Activated T-helper 1 cell treated with anti-CD3 and anti-CD28 coated beads, Interleukin-12 subunit alpha, Interleukin-12 subunit beta, Interleukin-2, Interleukin-4 antibody, amounts not matched to agents 30 ng/mL and 10 ng/mL and 1 ng/mL, durations not matched to agents 14 hours and 24 hours and 36 hours (primary cell): ENCODE measurements at regions of chr20 and their contacts with region 1.

Region 1: DNA sequence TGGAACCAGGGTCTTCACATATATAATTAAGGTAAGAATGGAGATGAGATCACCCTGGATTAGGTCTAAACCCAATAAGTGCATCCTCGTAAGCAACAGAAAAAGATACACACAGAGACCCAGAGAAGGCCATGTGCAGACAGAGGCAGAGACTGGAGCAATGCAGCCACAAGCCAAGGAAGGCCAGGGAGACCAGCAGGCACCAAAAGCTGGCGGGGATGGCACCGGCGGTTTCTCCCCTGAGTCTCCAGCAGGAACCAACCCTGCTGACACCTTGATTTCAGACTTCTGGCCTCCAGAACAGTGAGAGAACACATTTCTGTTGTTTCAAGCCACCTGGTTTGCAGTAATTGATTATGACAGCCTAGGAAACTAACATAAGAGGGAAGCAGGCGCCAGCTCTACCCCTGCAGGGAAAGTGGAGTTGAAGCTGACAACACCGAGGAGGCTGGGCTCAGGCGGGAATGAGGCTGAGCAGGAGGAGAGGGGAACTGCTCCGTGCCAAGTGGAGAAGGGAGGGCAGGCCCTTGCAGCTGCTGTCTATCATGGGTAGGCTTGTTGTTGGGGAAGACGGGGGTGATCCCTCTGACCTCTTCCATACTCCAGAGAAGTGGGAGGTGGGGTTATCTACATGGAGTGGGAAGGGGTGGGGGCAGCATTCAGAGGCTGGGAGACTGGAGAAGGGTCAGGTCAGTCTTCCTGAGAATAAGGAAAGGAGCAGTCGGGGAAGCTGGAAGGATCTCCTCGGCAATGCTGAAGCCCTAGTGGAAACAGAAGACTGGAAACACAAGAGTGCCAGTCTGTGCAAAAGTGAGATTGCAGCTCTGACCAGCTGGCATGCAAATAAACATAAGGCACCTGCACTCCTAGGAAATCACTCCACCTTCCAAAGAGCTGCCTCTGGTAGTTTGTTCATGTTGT is 72.7 kb downstream of the NFATC2 start:
- DNase-seq: no peak
- H3K4me3 Mint-ChIP-seq: no peak overlapping the region
- H3K27ac Mint-ChIP-seq: peak overlapping the region; percentile 83
- H3K4me1 Mint-ChIP-seq: peaks cover 63% of the 10 kb centered on the region
- H3K27me3 Mint-ChIP-seq: no peaks in the 10 kb centered on the region

Region 2: DNA sequence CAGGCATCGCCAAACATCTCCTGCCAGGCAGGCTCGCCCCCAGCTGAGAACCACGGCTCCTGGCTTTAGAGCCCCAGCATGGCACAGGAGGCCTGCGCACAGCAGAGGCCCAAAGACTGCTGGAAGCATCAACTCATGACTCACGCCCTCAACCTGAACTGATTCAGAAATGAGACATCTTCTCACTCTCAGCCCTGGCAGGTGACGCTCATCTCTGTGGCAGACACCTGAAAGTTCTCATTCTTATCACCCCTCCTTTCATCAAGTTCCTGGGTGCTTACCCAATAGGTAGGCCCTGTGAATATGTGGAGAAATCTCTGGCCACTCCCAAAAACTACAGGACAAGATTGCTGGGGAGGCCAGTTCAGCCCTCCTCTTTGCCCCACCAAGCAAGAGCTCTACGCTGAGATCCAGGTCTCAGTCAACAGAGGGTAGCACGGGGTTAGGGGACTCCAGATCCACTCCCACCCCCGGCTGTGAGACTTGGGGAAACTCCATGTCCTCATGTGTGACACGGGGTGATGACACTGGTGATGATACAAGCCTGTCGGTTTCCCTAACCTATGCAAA is 61.4 kb after region 1 on chr20:
- intact Hi-C with region 1: loop called (anchors 2 kb)
- DNase-seq: peak; percentile 58
- H3K4me3 Mint-ChIP-seq: peak overlapping the region; percentile 84
- H3K27ac Mint-ChIP-seq: peak overlapping the region; percentile 99
- H3K4me1 Mint-ChIP-seq: peaks cover 92% of the 10 kb centered on the region
- H3K27me3 Mint-ChIP-seq: no peaks in the 10 kb centered on the region